HepG2 (cell line): ENCODE measurements at regions of chr11 and their contacts with region 1.

Region 1: DNA sequence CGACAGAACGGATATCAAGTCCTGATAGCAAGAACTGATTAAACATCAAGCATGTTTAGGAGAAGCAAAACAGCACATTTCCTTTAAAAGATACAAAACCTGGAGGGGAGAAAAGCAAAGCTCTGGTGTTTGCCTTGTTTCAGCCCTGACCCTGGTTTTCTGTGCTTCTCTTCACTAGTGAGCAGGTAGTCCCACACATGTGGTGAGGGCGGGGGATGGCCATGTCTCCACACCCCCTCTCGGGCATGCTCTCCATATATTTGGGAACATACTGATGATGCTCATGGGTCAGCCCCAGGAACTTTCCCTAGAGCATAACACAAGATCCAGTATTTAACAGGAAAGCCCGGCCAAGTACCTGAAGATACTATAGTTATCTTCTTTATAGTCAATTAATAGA is 10.1 kb downstream of the C11orf16 start:
- DNase-seq: no peak
- ATAC-seq: no peak
- H3K4me3 ChIP-seq: no peak overlapping the region
- H3K27ac ChIP-seq: no peak overlapping the region
- H3K4me1 ChIP-seq: peaks cover 1% of the 10 kb centered on the region; the same call in 1 of the 2 replicates
- H3K27me3 ChIP-seq: no peaks in the 10 kb centered on the region
- CTCF ChIP-seq: no peak
- EP300 ChIP-seq: no peak
- POLR2A ChIP-seq: no peak
- RAD21 ChIP-seq: no peak

Region 2: GRCh38 chr11:8964324-8965320 is 41.9 kb after region 1 on chr11 and contains the start of gene TMEM9B:
- CTCF ChIA-PET with region 1: no interaction called
- POLR2A ChIA-PET with region 1: no interaction called
- in situ Hi-C with region 1: loop called (anchors 5 kb)
- intact Hi-C with region 1: no loop called
- DNase-seq: peak; percentile 84
- ATAC-seq: peak; percentile 92
- H3K4me3 ChIP-seq: peak within 1 kb of the TSS; percentile 86 to 93 (median 89)
- H3K27ac ChIP-seq: peak within 1 kb of the TSS; percentile 88
- H3K4me1 ChIP-seq: peaks cover 19% of the 10 kb centered on the region
- H3K27me3 ChIP-seq: no peaks in the 10 kb centered on the region
- CTCF ChIP-seq: 0 out of 2 replicates have a peak, but pooled peaks have one; percentile 16
- EP300 ChIP-seq: no peak
- POLR2A ChIP-seq: peak; percentile 76 to 92
- RAD21 ChIP-seq: peak; percentile 46
- total RNA-seq, gene TMEM9B: 17.4 and 20.8 TPM in 2 replicates

Region 3: DNA sequence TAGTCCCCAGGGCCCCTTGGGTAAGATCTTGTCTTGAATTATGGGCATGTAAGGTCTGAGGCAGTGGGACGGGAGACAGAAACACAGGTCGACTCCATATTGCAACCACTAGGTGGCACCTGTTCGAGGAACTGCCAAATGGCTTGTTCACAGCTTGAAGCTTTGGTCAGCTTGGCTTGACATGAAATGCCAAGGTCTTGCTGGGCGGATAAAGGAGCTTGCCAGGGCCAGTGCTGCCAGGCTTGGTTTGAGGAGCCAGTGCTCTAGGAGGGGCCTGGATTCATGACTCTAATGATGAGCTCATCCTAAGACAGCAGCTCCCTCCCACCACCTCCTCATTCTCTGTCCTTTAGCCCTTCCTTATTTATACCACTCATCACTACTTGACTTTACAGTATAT is 93.0 kb after region 1 on chr11:
- CTCF ChIA-PET with region 1: no interaction called
- POLR2A ChIA-PET with region 1: no interaction called
- in situ Hi-C with region 1: no loop called
- intact Hi-C with region 1: no loop called
- DNase-seq: peak; percentile 56
- ATAC-seq: peak; percentile 92
- H3K4me3 ChIP-seq: no peak overlapping the region
- H3K27ac ChIP-seq: no peak overlapping the region
- H3K4me1 ChIP-seq: no peaks in the 10 kb centered on the region
- H3K27me3 ChIP-seq: peaks cover 0 to 17% of the 10 kb centered on the region in 2 experiments; a peak in 4 of 5 replicates
- CTCF ChIP-seq: peak; percentile 86
- EP300 ChIP-seq: no peak
- POLR2A ChIP-seq: no peak
- RAD21 ChIP-seq: peak; percentile 53